AG04449 (cell line): ENCODE measurements at regions of chr2 and their contacts with region 1.

Region 1: GRCh38 chr2:95345566-95346230 is 48.6 kb downstream of the KCNIP3 start:
- DNase-seq: no peak
- H3K4me3 ChIP-seq: peak overlapping the region; percentile 63
- CTCF ChIP-seq: peak; percentile 96

Region 2: GRCh38 chr2:94964193-94964592 is 381.5 kb before region 1 on chr2:
- CTCF ChIA-PET with region 1: no interaction called
- POLR2A ChIA-PET with region 1: no interaction called
- DNase-seq: no peak
- H3K4me3 ChIP-seq: no peak overlapping the region
- CTCF ChIP-seq: no peak

Region 3: DNA sequence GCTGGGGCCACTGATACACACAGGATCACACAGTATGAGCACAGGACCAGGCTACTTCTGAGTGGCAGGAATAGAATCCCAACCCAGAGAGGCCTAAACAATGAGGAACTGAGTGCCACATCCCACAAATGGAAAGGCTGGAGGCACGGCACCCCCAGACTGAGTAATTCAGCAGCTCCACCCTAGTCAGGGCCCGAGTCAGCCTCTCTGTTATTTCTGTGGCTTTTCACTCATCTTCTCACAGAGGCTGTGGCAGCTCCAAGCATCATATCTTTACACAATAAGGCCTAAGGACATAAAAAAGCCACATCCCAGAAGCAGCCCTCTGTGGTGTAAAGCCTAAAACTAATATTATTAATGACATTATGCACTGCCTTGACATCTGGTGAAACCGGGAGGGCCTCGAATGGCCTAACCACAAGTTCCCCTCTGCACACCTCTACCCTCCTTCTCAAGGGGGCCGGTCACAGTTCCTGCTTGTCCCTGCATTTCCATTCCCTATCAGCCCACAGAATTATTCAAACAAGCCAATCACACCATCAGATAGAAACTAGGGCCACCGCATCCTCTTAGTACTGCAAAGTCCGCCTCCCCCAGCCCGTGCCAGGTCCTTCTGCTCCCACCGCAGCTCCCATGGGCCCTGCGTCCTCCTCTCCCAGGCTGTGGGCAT is 332.7 kb before region 1 on chr2:
- CTCF ChIA-PET with region 1: no interaction called
- POLR2A ChIA-PET with region 1: no interaction called
- DNase-seq: no peak
- H3K4me3 ChIP-seq: no peak overlapping the region
- CTCF ChIP-seq: no peak

Region 4: DNA sequence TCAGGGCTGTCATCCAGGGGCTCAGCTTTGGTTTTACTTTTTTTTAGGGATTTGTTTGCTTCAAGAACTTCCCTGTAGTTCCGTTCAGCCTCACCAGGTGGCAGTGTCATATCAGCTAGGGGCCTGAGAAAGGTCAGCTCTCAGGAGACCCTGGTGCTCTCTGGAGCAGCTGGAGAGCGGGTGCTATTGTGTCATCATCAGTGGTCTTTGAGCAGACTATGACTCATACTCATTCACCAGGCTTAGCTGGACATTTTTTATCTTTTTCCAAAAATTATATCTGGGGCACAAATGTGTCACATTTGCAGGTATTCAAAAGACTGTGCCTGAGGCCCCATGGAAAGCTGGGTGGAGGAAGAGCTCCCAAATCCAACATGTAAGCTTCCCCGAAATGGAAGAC is 114.0 kb before region 1 on chr2:
- CTCF ChIA-PET with region 1: interaction called, 17 read pairs
- POLR2A ChIA-PET with region 1: no interaction called
- DNase-seq: no peak
- H3K4me3 ChIP-seq: no peak overlapping the region
- CTCF ChIP-seq: peak; percentile 60

Region 5: GRCh38 chr2:95323347-95324185 is 22.1 kb before region 1 on chr2:
- CTCF ChIA-PET with region 1: interaction called, 19 read pairs
- POLR2A ChIA-PET with region 1: no interaction called
- DNase-seq: no peak
- H3K4me3 ChIP-seq: no peak overlapping the region
- CTCF ChIP-seq: peak; percentile 58

Region 6: GRCh38 chr2:95359031-95359430 is 13.3 kb after region 1 on chr2:
- CTCF ChIA-PET with region 1: interaction called, 23 read pairs
- POLR2A ChIA-PET with region 1: interaction called, 7 read pairs
- DNase-seq: peak; percentile 21
- H3K4me3 ChIP-seq: no peak overlapping the region
- CTCF ChIP-seq: no peak

Region 7: GRCh38 chr2:95402370-95403203 is 56.9 kb after region 1 on chr2 and contains the start of gene FAHD2A:
- CTCF ChIA-PET with region 1: interaction called, 14 read pairs
- POLR2A ChIA-PET with region 1: no interaction called
- DNase-seq: no peak
- H3K4me3 ChIP-seq: peak within 1 kb of the TSS; percentile 96
- CTCF ChIP-seq: no peak